Body of pancreas (tissue), 4 donors: ENCODE measurements at regions of chr2 and their contacts with region 1.

Region 1: GRCh38 chr2:9251154-9252001 is 44.8 kb downstream of the ASAP2 start:
- DNase-seq: no peak
- ATAC-seq: no peak
- H3K4me3 ChIP-seq: no peak overlapping the region
- H3K27ac ChIP-seq: no peak overlapping the region
- H3K4me1 ChIP-seq: peaks cover 18% of the 10 kb centered on the region
- H3K27me3 ChIP-seq: no peaks in the 10 kb centered on the region
- CTCF ChIP-seq: no peak
- POLR2A ChIP-seq: no peak

Region 2: DNA sequence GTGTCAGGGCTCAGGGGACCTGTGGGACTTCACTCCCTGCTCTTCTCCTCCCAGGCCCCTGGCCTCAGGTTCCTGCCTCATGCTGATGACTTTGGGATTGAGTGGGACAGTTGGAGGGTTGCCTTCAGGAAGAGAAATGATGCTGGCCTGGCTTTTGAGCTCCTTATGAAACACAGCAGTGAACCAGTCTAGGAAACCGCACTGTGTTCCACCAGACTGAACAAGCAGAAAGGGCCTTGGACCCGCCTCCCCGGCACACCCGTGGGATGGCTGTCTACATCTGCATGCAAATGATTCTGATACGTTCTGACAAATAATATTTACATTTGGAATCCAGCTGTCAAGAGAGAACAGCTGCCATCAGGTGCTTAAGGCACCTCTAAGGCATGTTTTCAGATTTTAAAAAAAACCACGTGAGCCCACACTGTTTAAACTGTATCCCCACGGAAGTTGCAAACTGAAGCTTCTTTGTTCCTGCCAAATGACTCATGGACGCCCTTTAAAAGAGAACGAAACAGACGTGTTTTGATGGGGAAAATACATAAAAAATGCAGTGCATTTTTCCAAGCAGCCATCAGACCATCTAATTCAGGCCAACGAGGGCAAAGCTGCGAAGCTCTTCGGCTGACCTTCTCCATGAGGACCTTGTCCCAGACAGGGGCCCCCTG is 72.3 kb before region 1 on chr2:
- intact Hi-C with region 1: loop called (anchors 10 kb)
- DNase-seq: peak; percentile 28 to 66 (median 50)
- ATAC-seq: peak; percentile 75
- H3K4me3 ChIP-seq: no peak overlapping the region
- H3K27ac ChIP-seq: peak overlapping the region; percentile 74 to 91 (median 83)
- H3K4me1 ChIP-seq: peaks cover 26% of the 10 kb centered on the region
- H3K27me3 ChIP-seq: no peaks in the 10 kb centered on the region
- CTCF ChIP-seq: no peak
- POLR2A ChIP-seq: no peak